Heart left ventricle (tissue), 16 donors: ENCODE measurements at regions of chr6 and their contacts with region 1.

Region 1: DNA sequence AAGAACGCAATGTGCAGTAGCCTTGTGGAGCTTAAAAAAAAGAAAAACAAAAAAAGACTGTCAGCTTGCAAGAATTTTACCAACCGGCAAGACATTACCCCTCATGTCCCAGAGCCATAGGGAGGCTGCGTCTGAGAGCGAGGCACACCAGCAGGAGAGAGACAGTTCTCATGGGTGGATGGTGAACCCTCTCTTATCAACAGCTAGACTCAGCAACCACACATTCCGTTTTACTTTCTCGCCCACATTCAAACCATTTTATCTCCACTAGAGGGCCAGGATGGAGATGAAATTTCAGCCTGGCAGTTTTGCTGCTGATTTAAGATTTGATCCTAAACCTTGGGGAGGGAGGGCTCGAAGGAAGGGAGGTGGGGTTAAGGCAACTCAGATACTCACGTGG is 247.0 kb downstream of the ATXN1 start:
- DNase-seq: no peak
- ATAC-seq: peak; percentile 27 to 57 (median 30)
- H3K4me3 ChIP-seq: no peak overlapping the region
- H3K27ac ChIP-seq: no peak overlapping the region
- H3K4me1 ChIP-seq: peaks cover 0 to 60% (median 35%) of the 10 kb centered on the region in 12 donors
- H3K27me3 ChIP-seq: no peaks in the 10 kb centered on the region
- CTCF ChIP-seq: peak in 11 of 12 donors; percentile 22 to 61 (median 36)
- POLR2A ChIP-seq: no peak

Region 2: GRCh38 chr6:16344756-16345155 is 169.5 kb before region 1 on chr6:
- intact Hi-C with region 1: loop called in 6 of 10 experiments (anchors 5 to 10 kb)
- DNase-seq: no peak
- ATAC-seq: no peak
- H3K4me3 ChIP-seq: no peak overlapping the region
- H3K27ac ChIP-seq: peak overlapping the region in 4 of 12 donors; percentile 10 to 53 (median 41)
- H3K4me1 ChIP-seq: peaks cover 0 to 33% (median 20%) of the 10 kb centered on the region in 12 donors
- H3K27me3 ChIP-seq: no peaks in the 10 kb centered on the region
- CTCF ChIP-seq: no peak
- POLR2A ChIP-seq: no peak